ENCODE measurements at regions of chr15 and their contacts with region 1.

Region 1: GRCh38 chr15:31435261-31435911 is 108.8 kb downstream of the KLF13 start:
- DNase-seq: peak; percentile 82 to 87
- ATAC-seq: peak; percentile 82 to 93 (median 89)
- H3K4me3 ChIP-seq: peak overlapping the region in 7 of 10 donors; percentile 3 to 47 (median 23)
- H3K27ac ChIP-seq: peak overlapping the region; percentile 12 to 83 (median 72)
- H3K4me1 ChIP-seq: peaks cover 2 to 50% (median 26%) of the 10 kb centered on the region in 9 donors
- H3K27me3 ChIP-seq: no peaks in the 10 kb centered on the region
- CTCF ChIP-seq: peak; percentile 56 to 94 (median 85)

Region 2: GRCh38 chr15:31049682-31050615 is 385.4 kb before region 1 on chr15:
- intact Hi-C with region 1: no loop called
- DNase-seq: no peak
- ATAC-seq: peak in 2 of 8 donors; percentile 31 to 49
- H3K4me3 ChIP-seq: no peak overlapping the region
- H3K27ac ChIP-seq: peak overlapping the region in 1 of 10 donors; percentile 55
- H3K4me1 ChIP-seq: peaks cover 0 to 20% (median 0%) of the 10 kb centered on the region in 9 donors
- H3K27me3 ChIP-seq: no peaks in the 10 kb centered on the region
- CTCF ChIP-seq: no peak

Region 3: DNA sequence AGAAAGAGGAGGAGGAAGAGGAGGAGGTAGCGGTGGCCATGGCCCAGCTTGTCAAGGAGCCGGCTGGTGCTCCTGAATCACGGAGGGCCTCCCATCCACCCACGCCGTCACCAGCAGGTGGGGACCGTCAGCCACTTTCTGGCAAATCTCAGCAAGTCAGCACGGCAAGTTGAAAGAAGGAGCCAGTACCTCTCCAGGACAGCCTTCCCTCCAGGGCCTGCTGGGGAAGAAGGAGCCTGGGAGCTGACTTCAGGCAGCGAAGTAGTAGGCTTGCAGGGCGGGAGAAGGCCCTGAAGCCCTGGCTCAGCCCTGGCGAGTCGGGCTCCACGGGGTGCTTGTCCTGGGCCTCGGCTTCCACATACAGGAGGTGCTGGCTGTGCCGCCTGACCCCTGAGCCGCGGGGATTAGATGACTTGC is 234.6 kb before region 1 on chr15:
- intact Hi-C with region 1: loop called in 6 of 10 experiments (anchors 2 to 5 kb)
- DNase-seq: peak; percentile 75 to 83
- ATAC-seq: peak; percentile 89 to 97 (median 92)
- H3K4me3 ChIP-seq: no peak overlapping the region
- H3K27ac ChIP-seq: no peak overlapping the region
- H3K4me1 ChIP-seq: peaks cover 0 to 8% (median 0%) of the 10 kb centered on the region in 9 donors
- H3K27me3 ChIP-seq: no peaks in the 10 kb centered on the region
- CTCF ChIP-seq: peak; percentile 27 to 93 (median 69)

Region 4: GRCh38 chr15:31206386-31206785 is 229.0 kb before region 1 on chr15:
- intact Hi-C with region 1: loop called in 8 of 10 experiments (anchors 2 to 10 kb)
- DNase-seq: no peak
- ATAC-seq: no peak
- H3K4me3 ChIP-seq: no peak overlapping the region
- H3K27ac ChIP-seq: no peak overlapping the region
- H3K4me1 ChIP-seq: no peaks in the 10 kb centered on the region
- H3K27me3 ChIP-seq: no peaks in the 10 kb centered on the region
- CTCF ChIP-seq: peak in 3 of 9 donors; percentile 23 to 35 (median 26)

Region 5: GRCh38 chr15:31338879-31339557 is 96.4 kb before region 1 on chr15:
- intact Hi-C with region 1: loop called in 1 of 10 experiments (anchors 10 kb)
- DNase-seq: peak; percentile 80 to 88
- ATAC-seq: peak; percentile 43 to 86 (median 80)
- H3K4me3 ChIP-seq: peak overlapping the region in 4 of 10 donors; percentile 5 to 25 (median 15)
- H3K27ac ChIP-seq: peak overlapping the region; percentile 30 to 100 (median 80)
- H3K4me1 ChIP-seq: peaks cover 76 to 99% (median 99%) of the 10 kb centered on the region in 9 donors
- H3K27me3 ChIP-seq: no peaks in the 10 kb centered on the region
- CTCF ChIP-seq: no peak

Region 6: DNA sequence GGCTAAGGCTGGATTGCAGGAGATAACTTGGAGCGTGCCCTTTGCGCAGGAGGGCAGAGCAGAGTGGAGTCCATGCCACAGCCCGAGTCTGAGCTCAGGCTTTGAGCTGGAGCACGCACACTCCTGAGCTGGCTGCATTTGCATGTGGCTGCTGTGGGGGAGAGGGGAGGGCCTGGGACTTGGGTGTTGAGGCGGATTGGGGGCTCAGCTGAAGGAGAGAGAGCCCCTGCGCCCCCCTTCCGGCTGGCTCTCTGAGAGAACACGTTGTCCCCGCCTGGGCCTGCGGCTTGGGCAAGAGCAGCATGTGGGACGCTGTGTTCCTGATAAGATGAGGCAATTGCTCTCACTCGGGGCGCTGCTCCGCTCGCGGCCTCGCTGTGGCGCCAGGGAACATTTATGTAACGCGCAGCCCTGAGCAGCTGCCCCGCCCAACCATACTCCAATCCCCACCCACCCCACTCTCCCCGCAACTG is 69.7 kb before region 1 on chr15:
- intact Hi-C with region 1: loop called in 5 of 10 experiments (anchors 2 to 10 kb)
- DNase-seq: peak; percentile 91 to 93
- ATAC-seq: peak; percentile 89 to 93 (median 92)
- H3K4me3 ChIP-seq: peak overlapping the region in 9 of 10 donors; percentile 21 to 39 (median 32)
- H3K27ac ChIP-seq: peak overlapping the region; percentile 78 to 97 (median 93)
- H3K4me1 ChIP-seq: peaks cover 57 to 100% (median 98%) of the 10 kb centered on the region in 9 donors
- H3K27me3 ChIP-seq: no peaks in the 10 kb centered on the region
- CTCF ChIP-seq: peak in 8 of 9 donors; percentile 30 to 62 (median 50)

Region 7: GRCh38 chr15:31396881-31397560 is 38.4 kb before region 1 on chr15:
- intact Hi-C with region 1: loop called in 4 of 10 experiments (anchors 5 kb)
- DNase-seq: peak; percentile 94 to 95
- ATAC-seq: peak; percentile 82 to 94 (median 92)
- H3K4me3 ChIP-seq: peak overlapping the region in 4 of 10 donors; percentile 4 to 32 (median 14)
- H3K27ac ChIP-seq: peak overlapping the region; percentile 25 to 88 (median 83)
- H3K4me1 ChIP-seq: peaks cover 13 to 59% (median 32%) of the 10 kb centered on the region in 9 donors
- H3K27me3 ChIP-seq: peaks cover 0 to 11% (median 0%) of the 10 kb centered on the region in 7 donors
- CTCF ChIP-seq: peak in 5 of 9 donors; percentile 36 to 60 (median 51)

Region 8: GRCh38 chr15:31402511-31403056 is 32.8 kb before region 1 on chr15:
- intact Hi-C with region 1: loop called in 4 of 10 experiments (anchors 5 kb)
- DNase-seq: peak; percentile 75 to 76
- ATAC-seq: peak; percentile 62 to 86 (median 78)
- H3K4me3 ChIP-seq: no peak overlapping the region
- H3K27ac ChIP-seq: peak overlapping the region; percentile 24 to 73 (median 66)
- H3K4me1 ChIP-seq: peaks cover 12 to 58% (median 26%) of the 10 kb centered on the region in 9 donors
- H3K27me3 ChIP-seq: no peaks in the 10 kb centered on the region
- CTCF ChIP-seq: no peak